ENCODE measurements at regions of chr2 and their contacts with region 1.

Region 1: DNA sequence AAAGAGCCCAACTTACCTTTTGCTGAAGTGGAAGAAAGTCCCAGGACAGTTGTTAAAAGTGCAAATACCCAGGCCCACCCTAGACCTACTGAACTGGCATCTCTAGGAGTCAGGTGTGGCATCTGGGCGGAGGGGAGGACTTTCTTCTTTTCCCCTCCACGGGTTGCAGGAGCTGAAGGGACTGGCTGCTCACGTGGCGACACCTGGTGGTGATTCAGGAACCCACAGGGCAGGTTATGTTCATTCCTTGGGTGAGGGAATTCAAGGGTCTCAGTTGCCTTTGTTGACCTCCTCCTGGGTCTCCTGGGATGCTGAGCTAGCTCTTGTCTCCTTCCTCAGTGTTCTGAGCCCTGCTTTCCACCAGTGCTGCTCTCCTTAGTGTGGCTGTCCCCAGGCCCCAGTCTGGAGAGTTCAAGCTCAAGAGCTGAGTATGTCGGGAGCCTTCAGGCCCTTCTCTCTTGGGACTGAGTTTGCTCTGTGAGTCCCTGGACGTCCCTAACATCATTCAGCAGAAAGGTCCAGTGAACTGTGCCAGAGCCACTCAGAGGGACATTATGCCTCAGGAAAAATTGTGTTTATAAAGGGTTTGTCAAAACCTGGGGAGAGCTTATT is 56.9 kb downstream of the DYSF start:
- DNase-seq: peak; percentile 72 to 85
- ATAC-seq: peak; percentile 65 to 84 (median 74)
- H3K4me3 ChIP-seq: no peak overlapping the region
- H3K27ac ChIP-seq: no peak overlapping the region
- H3K4me1 ChIP-seq: peaks cover 9% of the 10 kb centered on the region
- H3K27me3 ChIP-seq: no peaks in the 10 kb centered on the region
- CTCF ChIP-seq: peak; percentile 88

Region 2: DNA sequence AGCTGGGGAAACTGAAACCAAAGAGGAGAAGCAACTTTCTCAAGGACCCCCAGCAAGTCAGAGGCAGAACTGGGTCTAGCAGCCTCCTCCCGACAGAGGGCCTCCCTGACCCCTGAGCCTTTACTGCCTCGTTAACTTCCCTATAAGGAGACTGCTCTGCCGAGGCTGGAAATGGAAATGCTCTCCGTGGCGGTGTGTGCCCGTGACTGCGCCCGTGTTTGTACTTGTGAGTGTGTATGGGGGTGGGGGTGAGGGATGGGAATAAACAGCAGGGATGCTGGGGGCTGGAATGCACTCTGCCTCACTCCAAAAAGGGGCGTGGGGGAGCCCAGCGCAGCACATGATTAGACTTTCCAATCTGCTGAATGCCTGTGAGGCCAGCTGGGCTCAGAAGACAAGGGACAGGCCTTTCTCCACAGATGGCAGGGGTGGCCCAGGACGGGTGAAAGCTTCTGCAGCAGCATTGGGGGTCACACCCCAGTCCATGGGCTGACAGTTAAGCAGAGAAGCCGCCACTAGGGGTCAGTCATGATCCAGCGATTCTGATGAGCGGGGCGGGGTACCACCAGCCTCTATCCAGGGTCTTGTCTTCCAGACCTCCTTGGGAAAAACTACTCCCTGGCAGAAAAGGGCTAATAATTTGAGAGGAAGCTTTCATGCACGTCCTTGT is 353.0 kb before region 1 on chr2:
- intact Hi-C with region 1: loop called in 1 of 2 experiments (anchors 10 kb)
- DNase-seq: peak; percentile 31 to 57
- ATAC-seq: peak in 3 of 4 donors; percentile 75 to 81 (median 76)
- H3K4me3 ChIP-seq: peak overlapping the region; percentile 30
- H3K27ac ChIP-seq: no peak overlapping the region
- H3K4me1 ChIP-seq: no peaks in the 10 kb centered on the region
- H3K27me3 ChIP-seq: peaks cover 0 to 3% (median 0%) of the 10 kb centered on the region in 3 donors
- CTCF ChIP-seq: peak; percentile 53

Region 3: GRCh38 chr2:71226965-71227560 is 283.2 kb before region 1 on chr2 and contains the start of gene PAIP2B:
- intact Hi-C with region 1: loop called in 1 of 2 experiments (anchors 5 kb)
- DNase-seq: peak; percentile 99
- ATAC-seq: peak; percentile 93 to 97 (median 94)
- H3K4me3 ChIP-seq: peak within 1 kb of the TSS; percentile 90
- H3K27ac ChIP-seq: peak within 1 kb of the TSS; percentile 95
- H3K4me1 ChIP-seq: no peaks in the 10 kb centered on the region
- H3K27me3 ChIP-seq: no peaks in the 10 kb centered on the region
- CTCF ChIP-seq: no peak
- total RNA-seq, gene PAIP2B: 14.0 to 47.4 (median 36.9) TPM

Region 4: GRCh38 chr2:71299507-71299906 is 210.8 kb before region 1 on chr2:
- intact Hi-C with region 1: loop called (anchors 2 to 5 kb)
- DNase-seq: no peak
- ATAC-seq: peak in 1 of 4 donors; percentile 59
- H3K4me3 ChIP-seq: no peak overlapping the region
- H3K27ac ChIP-seq: no peak overlapping the region
- H3K4me1 ChIP-seq: peaks cover 10% of the 10 kb centered on the region
- H3K27me3 ChIP-seq: no peaks in the 10 kb centered on the region
- CTCF ChIP-seq: peak; percentile 75

Region 5: GRCh38 chr2:71460595-71461303 is 49.6 kb before region 1 on chr2:
- intact Hi-C with region 1: loop called (anchors 2 kb)
- DNase-seq: peak; percentile 45 to 78
- ATAC-seq: peak; percentile 60 to 75 (median 72)
- H3K4me3 ChIP-seq: no peak overlapping the region
- H3K27ac ChIP-seq: peak overlapping the region; percentile 74
- H3K4me1 ChIP-seq: peaks cover 98% of the 10 kb centered on the region
- H3K27me3 ChIP-seq: no peaks in the 10 kb centered on the region
- CTCF ChIP-seq: peak; percentile 73